CD4-positive, alpha-beta memory T cell (primary cell): ENCODE measurements at regions of chr11 and their contacts with region 1.

Region 1: GRCh38 chr11:7538031-7538430 is 24.2 kb downstream of the PPFIBP2 start:
- DNase-seq: peak in 2 of 5 donors; percentile 11 to 24
- H3K4me3 ChIP-seq: no peak overlapping the region
- H3K4me3 Mint-ChIP-seq: peak overlapping the region in 7 of 8 donors; percentile 31 to 74 (median 68)
- H3K27ac ChIP-seq: no peak overlapping the region
- H3K27ac Mint-ChIP-seq: peak overlapping the region in 6 of 7 donors; percentile 25 to 89 (median 78)
- H3K4me1 ChIP-seq: peaks cover 30% of the 10 kb centered on the region
- H3K4me1 Mint-ChIP-seq: peaks cover 19 to 84% (median 57%) of the 10 kb centered on the region in 4 donors
- H3K27me3 ChIP-seq: no peaks in the 10 kb centered on the region
- H3K27me3 Mint-ChIP-seq: peaks cover 0 to 5% of the 10 kb centered on the region in 2 donors

Region 2: DNA sequence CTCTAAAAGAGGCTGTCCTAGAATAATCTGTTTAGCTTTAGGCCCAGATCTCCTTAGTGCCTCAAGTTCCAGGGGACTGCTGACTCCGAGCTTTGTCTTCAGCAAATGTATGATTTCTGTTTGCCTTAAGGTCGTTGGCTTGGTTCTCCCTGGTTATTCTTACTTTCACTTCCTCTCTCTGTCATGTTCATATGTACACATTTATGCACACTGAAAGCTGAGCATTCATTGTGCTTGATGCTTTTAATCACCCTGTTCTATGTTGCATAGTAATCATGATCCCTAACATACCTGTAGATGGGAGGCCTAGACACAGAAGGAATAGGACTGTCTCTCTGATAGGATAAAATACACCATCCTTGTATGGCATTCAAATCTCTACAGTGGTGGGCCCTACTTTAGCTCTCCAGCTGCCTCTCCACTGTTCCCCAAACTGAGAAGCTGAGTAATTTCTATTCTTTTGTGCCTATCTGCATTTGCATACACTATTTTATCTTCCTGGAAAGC is 17.0 kb before region 1 on chr11:
- CTCF ChIA-PET with region 1: interaction called, 15 read pairs
- POLR2A ChIA-PET with region 1: interaction called, 6 read pairs
- intact Hi-C with region 1: no loop called
- DNase-seq: no peak
- H3K4me3 ChIP-seq: no peak overlapping the region
- H3K4me3 Mint-ChIP-seq: no peak overlapping the region
- H3K27ac ChIP-seq: no peak overlapping the region
- H3K27ac Mint-ChIP-seq: no peak overlapping the region
- H3K4me1 ChIP-seq: peaks cover 47% of the 10 kb centered on the region
- H3K4me1 Mint-ChIP-seq: peaks cover 23 to 67% (median 28%) of the 10 kb centered on the region in 4 donors
- H3K27me3 ChIP-seq: no peaks in the 10 kb centered on the region
- H3K27me3 Mint-ChIP-seq: no peaks in the 10 kb centered on the region